Esophagus muscularis mucosa (tissue), 4 donors: ENCODE measurements at regions of chr6 and their contacts with region 1.

Region 1: GRCh38 chr6:110949679-110950285 is 8.7 kb upstream of the GTF3C6 start:
- DNase-seq: no peak
- H3K4me3 ChIP-seq: no peak overlapping the region
- H3K27ac ChIP-seq: no peak overlapping the region
- H3K4me1 ChIP-seq: peaks cover 0 to 3% (median 0%) of the 10 kb centered on the region in 4 donors
- H3K27me3 ChIP-seq: no peaks in the 10 kb centered on the region
- CTCF ChIP-seq: peak; percentile 36 to 58 (median 54)
- EP300 ChIP-seq: no peak
- POLR2A ChIP-seq: no peak

Region 2: GRCh38 chr6:110102411-110102810 is 847.4 kb before region 1 on chr6:
- intact Hi-C with region 1: no loop called
- DNase-seq: no peak
- H3K4me3 ChIP-seq: no peak overlapping the region
- H3K27ac ChIP-seq: no peak overlapping the region
- H3K4me1 ChIP-seq: peaks cover 1 to 6% (median 3%) of the 10 kb centered on the region in 4 donors
- H3K27me3 ChIP-seq: no peaks in the 10 kb centered on the region
- CTCF ChIP-seq: no peak
- EP300 ChIP-seq: no peak
- POLR2A ChIP-seq: no peak

Region 3: DNA sequence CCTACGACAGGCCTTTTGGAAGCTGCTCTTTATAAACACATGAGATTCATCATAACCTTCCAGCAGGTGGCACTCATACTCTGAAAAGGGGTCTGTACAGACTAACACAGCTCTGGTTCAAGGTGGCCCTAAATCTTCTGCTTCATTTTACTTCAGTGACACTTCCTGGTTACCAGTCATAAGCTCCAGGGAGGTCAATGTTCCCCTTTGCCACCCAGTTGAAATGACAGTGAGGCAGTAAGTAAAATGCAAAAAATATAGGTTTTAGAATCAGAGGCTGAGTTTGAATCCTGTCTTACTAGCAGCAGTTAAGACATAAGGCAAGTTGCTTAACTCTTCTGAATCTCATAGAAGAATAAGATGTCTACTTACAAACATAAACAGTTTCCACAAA is 267.3 kb before region 1 on chr6:
- intact Hi-C with region 1: loop called (anchors 2 kb)
- DNase-seq: no peak
- H3K4me3 ChIP-seq: no peak overlapping the region
- H3K27ac ChIP-seq: no peak overlapping the region
- H3K4me1 ChIP-seq: peaks cover 0 to 10% (median 5%) of the 10 kb centered on the region in 4 donors
- H3K27me3 ChIP-seq: no peaks in the 10 kb centered on the region
- CTCF ChIP-seq: peak; percentile 65 to 73 (median 71)
- EP300 ChIP-seq: no peak
- POLR2A ChIP-seq: no peak